ENCODE measurements at regions of chr10 and their contacts with region 1.

Region 1: GRCh38 chr10:29317027-29317420 is 28.2 kb downstream of the LYZL1 start:
- DNase-seq: no peak
- H3K4me3 Mint-ChIP-seq: no peak overlapping the region
- H3K27ac Mint-ChIP-seq: no peak overlapping the region
- H3K4me1 Mint-ChIP-seq: peaks cover 5% of the 10 kb centered on the region
- H3K27me3 Mint-ChIP-seq: peaks cover 24% of the 10 kb centered on the region

Region 2: DNA sequence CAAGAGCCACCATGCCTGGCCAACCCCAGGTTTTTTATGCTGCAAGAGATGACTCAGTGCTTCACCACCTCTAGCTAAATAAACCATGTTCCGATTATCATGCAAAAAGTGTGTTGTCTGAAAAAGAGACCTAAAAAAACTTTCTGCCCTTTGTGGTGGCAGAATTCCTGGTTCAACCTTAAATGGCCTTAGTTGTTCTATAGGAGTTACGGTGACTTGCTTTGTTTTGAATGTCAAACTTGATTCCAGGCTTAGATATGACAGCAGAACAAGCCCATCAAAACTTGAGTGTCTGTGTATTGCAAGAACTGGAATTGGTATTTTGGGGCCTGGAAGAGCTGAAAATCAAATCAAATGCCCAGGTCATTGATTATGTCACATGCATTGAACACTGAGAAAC is 242.0 kb before region 1 on chr10:
- CTCF ChIA-PET with region 1: no interaction called
- POLR2A ChIA-PET with region 1: no interaction called
- intact Hi-C with region 1: no loop called
- DNase-seq: no peak
- H3K4me3 Mint-ChIP-seq: no peak overlapping the region
- H3K27ac Mint-ChIP-seq: no peak overlapping the region
- H3K4me1 Mint-ChIP-seq: no peaks in the 10 kb centered on the region
- H3K27me3 Mint-ChIP-seq: peaks cover 6% of the 10 kb centered on the region

Region 3: DNA sequence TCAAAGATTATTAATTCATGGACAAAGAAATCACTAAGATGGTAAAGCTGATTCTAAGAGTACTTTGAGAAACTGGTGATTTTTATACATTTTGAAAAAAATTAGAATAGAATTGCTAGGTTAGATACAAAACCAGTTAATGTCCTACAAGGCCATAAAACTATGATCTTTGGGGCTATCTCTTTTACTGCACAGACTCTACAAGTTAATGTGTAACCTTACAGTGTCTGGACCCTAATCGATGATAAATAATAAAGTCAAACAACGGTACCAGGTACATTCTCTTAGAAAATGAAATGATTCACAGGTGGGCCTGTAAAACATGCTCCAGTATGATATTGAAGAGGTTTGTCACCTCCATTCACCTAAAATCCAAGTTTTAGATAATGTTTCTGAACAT is 227.9 kb before region 1 on chr10:
- CTCF ChIA-PET with region 1: no interaction called
- POLR2A ChIA-PET with region 1: no interaction called
- intact Hi-C with region 1: no loop called
- DNase-seq: no peak
- H3K4me3 Mint-ChIP-seq: no peak overlapping the region
- H3K27ac Mint-ChIP-seq: no peak overlapping the region
- H3K4me1 Mint-ChIP-seq: no peaks in the 10 kb centered on the region
- H3K27me3 Mint-ChIP-seq: peaks cover 2% of the 10 kb centered on the region

Region 4: DNA sequence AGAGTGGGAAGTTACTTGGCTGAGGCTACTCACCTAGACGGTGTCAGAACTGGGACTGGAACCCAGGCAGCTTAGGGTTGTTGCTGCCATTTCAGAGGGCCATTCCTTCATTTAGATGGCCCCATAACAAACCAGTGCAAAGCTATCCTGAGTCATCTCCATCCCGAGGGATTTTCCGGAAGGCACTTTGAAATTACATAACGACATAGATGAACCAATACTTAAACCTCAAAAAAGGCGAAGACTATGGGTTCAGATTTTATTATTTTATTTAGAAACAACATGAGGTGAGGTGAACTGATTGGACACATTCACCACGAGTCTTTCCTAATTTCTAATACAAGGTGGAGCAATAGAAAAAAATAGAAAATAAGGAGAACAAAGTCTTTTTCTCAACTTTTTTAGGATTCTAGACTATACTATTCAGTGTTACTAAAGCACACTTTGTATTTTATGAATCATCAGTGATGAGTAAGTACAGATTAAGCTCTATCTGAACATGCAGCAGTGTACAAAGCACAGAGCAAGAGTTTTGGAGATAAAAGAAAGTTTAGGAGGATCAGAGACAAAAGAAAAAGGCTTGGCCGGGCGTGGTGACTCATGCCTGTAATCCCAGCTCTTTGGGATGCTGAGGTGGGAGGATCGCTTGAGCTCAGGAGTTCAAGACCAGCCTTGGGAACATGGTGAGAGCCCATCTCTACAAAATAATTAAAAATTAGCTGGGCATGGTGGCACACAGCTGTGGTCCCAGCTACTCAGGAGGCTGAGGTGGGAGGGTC is 397.3 kb after region 1 on chr10:
- CTCF ChIA-PET with region 1: no interaction called
- POLR2A ChIA-PET with region 1: no interaction called
- intact Hi-C with region 1: no loop called
- DNase-seq: no peak
- H3K4me3 Mint-ChIP-seq: no peak overlapping the region
- H3K27ac Mint-ChIP-seq: no peak overlapping the region
- H3K4me1 Mint-ChIP-seq: peaks cover 19% of the 10 kb centered on the region
- H3K27me3 Mint-ChIP-seq: no peaks in the 10 kb centered on the region

Region 5: DNA sequence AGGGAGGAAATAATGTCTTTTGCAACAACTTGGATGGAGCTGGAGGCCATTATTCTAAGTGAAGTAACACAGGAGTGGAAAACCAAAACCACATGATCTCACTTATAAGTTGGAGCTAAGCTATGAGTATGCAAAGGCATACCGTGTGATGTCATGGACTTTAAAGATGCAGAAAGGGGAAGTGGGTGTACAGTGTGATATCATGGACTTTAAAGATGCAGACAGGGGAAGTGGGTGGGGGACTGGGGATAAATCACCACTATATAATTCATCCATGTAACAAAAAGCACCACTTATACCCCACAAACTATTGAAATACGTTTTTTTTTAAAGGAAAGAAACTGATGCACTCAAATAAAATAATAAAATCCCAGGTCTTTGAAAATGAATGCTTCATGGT is 1283.0 kb after region 1 on chr10:
- CTCF ChIA-PET with region 1: no interaction called
- POLR2A ChIA-PET with region 1: no interaction called
- intact Hi-C with region 1: loop called (anchors 10 kb)
- DNase-seq: no peak
- H3K4me3 Mint-ChIP-seq: no peak overlapping the region
- H3K27ac Mint-ChIP-seq: no peak overlapping the region
- H3K4me1 Mint-ChIP-seq: no peaks in the 10 kb centered on the region
- H3K27me3 Mint-ChIP-seq: peaks cover 3% of the 10 kb centered on the region